ENCODE measurements at regions of chr19 and their contacts with region 1.

Region 1: GRCh38 chr19:49512970-49513745 is 697 bp downstream of the FCGRT start:
- DNase-seq: no peak
- H3K4me3 ChIP-seq: peak overlapping the region in 2 of 3 experiments; percentile 32 to 36
- H3K27ac ChIP-seq: no peak overlapping the region
- H3K4me1 ChIP-seq: peaks cover 7% of the 10 kb centered on the region
- H3K27me3 ChIP-seq: peaks cover 4% of the 10 kb centered on the region
- CTCF ChIP-seq: no peak

Region 2: DNA sequence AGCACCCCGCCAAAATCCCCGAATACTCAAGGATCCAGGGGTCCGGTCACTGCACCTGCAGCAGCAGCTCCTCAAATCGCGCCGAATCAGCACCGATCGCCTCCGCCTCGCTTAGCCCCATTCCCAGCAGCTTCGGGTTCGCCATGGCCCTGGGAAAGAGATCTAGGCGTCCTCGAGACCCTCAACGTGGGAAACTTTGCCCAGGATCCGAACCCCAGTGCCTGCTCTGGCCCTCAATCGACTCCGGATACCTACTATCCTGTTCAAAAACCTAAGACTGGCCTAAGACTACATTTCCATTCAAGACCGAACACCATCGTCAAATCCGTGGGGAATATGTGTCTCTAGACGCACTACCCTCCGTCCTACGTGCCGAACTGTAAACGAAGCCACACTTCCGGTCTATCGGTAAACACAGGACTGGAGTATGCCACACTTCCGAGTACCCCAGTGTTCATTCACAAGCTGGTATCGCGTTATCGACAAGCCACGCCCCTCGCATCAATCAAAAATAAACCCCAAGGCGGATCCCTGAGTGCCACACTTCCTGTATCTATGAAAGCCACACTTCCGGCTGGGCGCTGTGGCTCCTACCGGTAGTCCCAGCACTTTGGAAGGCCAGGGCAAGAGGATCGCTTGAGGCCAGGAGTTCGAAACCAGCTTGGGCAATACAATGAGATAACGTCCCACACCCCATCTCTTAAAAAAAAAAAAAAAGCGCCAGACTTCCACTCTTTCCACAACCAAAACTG is 61.6 kb before region 1 on chr19 and contains the start of gene PIH1D1:
- CTCF ChIA-PET with region 1: no interaction called
- dilution Hi-C with region 1: loop called (anchors 5 kb)
- in situ Hi-C with region 1: no loop called
- intact Hi-C with region 1: no loop called
- DNase-seq: peak; percentile 99
- H3K4me3 ChIP-seq: peak within 1 kb of the TSS; percentile 71 to 92 (median 77)
- H3K27ac ChIP-seq: peak within 1 kb of the TSS; percentile 92
- H3K4me1 ChIP-seq: peaks cover 13% of the 10 kb centered on the region
- H3K27me3 ChIP-seq: no peaks in the 10 kb centered on the region
- CTCF ChIP-seq: no peak
- total RNA-seq, gene PIH1D1: 61.2 to 62.4 TPM

Region 3: DNA sequence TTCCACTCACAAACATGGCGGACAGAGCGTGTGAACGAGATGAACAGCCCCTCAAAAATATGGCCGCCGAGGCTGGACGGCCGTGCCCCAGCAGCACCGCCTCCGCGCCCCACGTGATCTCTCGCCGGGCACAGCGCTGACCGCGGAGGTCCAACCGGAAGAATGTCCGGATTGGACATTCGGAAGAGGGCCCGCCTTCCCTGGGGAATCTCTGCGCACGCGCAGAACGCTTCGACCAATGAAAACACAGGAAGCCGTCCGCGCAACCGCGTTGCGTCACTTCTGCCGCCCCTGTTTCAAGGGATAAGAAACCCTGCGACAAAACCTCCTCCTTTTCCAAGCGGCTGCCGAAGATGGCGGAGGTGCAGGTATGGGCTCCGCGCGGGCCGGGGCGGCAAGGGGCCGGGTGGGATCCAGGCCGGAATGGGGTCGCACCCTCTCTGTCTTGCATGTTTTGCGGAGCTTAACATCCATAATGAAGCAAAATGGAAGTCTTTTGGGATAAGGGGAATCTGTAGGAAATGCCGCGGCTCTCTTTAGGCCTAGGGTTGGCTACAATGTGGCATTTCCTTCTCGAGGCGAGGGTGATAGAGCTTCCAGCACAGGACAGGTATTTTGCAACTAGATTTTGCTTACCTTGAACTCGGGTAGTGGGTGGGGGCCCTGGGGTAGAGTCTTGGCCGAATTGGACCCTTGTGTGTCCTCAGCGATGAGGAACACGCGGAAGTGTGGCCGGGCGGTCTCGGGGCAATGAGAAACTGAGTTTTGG is 25.7 kb before region 1 on chr19 and contains the start of gene RPL13A:
- CTCF ChIA-PET with region 1: no interaction called
- dilution Hi-C with region 1: no loop called
- in situ Hi-C with region 1: no loop called
- intact Hi-C with region 1: no loop called
- DNase-seq: peak; percentile 98
- H3K4me3 ChIP-seq: peak within 1 kb of the TSS; percentile 77 to 99 (median 99)
- H3K27ac ChIP-seq: peak within 1 kb of the TSS; percentile 96
- H3K4me1 ChIP-seq: peaks cover 11% of the 10 kb centered on the region
- H3K27me3 ChIP-seq: no peaks in the 10 kb centered on the region
- CTCF ChIP-seq: no peak
- total RNA-seq, gene RPL13A: 1,880 to 1,955 TPM

Region 4: DNA sequence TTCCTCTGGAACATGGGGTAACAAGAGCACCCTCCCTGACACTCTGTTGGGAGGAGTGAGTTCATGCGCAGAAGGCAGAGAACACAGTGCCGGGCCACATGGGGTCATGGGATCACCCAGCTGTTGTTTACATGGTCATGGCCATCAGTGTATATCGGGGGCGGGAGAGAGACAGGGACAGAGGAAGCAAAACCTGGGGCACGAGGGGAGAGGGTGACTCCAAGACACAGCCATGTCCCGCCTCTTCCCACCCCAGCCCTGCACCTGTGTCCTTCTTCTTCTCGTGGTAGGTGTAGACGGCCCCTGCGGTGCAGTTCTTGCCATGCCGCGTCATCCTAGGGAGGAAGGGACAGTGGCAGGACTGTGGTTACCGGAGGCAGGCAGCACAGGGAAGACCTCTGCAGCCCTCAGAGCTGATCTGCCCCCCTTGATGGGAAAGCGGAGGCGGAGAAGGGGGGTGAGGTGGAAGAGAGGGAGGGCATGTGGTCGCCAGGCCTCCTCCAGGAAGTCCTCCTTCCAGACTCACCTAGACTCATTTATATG is 47.3 kb after region 1 on chr19:
- CTCF ChIA-PET with region 1: no interaction called
- dilution Hi-C with region 1: loop called (anchors 5 kb)
- in situ Hi-C with region 1: no loop called
- intact Hi-C with region 1: no loop called
- DNase-seq: no peak
- H3K4me3 ChIP-seq: no peak overlapping the region
- H3K27ac ChIP-seq: no peak overlapping the region
- H3K4me1 ChIP-seq: no peaks in the 10 kb centered on the region
- H3K27me3 ChIP-seq: no peaks in the 10 kb centered on the region
- CTCF ChIP-seq: no peak

Region 5: DNA sequence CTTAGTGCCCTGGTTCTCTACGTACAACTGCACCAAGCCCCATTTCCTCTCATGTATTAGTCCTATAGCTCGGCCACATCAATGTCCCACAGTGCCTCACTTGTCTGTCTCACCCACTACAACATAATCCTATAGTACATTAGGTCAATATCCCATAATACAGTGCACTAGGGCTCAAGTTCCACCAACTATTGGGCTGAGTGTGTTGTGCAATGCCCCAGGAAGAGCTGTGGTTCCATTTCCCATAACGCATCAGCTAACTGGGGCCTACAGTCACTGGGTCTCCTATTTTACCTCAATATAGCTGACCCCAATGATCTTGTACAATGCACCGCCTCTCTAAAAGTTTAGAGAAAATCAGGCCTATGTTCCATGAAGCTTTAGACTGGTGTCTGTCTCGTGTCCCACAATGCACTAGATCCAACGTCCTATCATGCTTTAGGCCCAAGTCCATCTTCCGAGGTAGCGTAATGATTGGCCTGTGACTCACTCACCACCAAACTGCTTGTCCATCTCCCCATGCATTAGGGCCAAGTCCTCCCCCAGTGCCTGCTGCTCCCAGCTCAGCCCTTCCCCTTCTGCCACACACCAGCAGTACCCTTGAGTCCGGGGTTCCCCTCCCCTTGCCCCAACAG is 228.2 kb after region 1 on chr19:
- CTCF ChIA-PET with region 1: no interaction called
- dilution Hi-C with region 1: loop called (anchors 5 kb)
- in situ Hi-C with region 1: no loop called
- intact Hi-C with region 1: no loop called
- DNase-seq: no peak
- H3K4me3 ChIP-seq: no peak overlapping the region
- H3K27ac ChIP-seq: no peak overlapping the region
- H3K4me1 ChIP-seq: no peaks in the 10 kb centered on the region
- H3K27me3 ChIP-seq: no peaks in the 10 kb centered on the region
- CTCF ChIP-seq: no peak

Region 6: GRCh38 chr19:49779731-49780589 is 266.8 kb after region 1 on chr19:
- CTCF ChIA-PET with region 1: no interaction called
- dilution Hi-C with region 1: loop called (anchors 5 kb)
- in situ Hi-C with region 1: no loop called
- intact Hi-C with region 1: no loop called
- DNase-seq: no peak
- H3K4me3 ChIP-seq: no peak overlapping the region
- H3K27ac ChIP-seq: no peak overlapping the region
- H3K4me1 ChIP-seq: no peaks in the 10 kb centered on the region
- H3K27me3 ChIP-seq: no peaks in the 10 kb centered on the region
- CTCF ChIP-seq: no peak